Activated B cell treated with CpG ODN at 0.5 μM for 24 hours (primary cell): ENCODE measurements at regions of chr20 and their contacts with region 1.

Region 1: DNA sequence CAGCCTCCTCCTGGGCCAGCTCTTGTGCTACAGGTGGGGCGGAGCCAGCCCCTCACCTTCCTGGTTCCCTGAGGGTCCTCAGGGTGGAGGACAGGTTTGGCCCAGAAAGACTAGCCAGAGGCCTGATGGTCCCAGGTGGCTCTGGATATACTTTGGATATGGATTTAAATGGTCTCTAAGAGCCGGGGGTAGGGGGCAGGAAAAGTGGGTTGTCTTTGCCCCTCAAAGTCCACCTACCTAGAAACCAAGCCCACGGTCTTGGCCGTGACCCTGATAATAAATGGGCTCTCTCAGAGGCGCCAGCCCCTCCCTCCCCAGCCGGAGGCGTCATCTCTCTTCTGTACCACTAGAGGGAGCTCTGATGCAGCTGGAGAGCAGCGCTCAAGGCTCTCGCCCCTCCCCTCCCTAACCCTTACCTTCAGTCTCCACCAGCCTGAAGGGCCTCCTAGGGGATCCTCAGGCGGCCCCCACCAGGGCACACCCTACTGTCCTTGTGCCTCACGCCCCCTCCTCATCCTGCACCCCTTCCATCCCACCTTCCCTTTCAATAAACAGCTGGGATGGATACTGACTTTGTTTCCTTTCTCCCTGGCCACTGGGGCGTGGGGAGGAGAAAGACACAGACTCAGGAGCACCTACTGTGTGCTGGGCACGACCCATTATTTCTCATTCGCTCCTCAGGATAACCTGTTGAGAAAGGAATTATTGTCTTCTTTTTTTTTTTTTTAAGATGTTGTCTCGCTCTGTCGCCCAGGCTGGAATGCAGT is 7.6 kb downstream of the NRSN2 start:
- DNase-seq: peak; percentile 70
- ATAC-seq: peak; percentile 100
- H3K4me3 Mint-ChIP-seq: no peak overlapping the region
- H3K27ac Mint-ChIP-seq: no peak overlapping the region
- H3K4me1 Mint-ChIP-seq: peaks cover 11% of the 10 kb centered on the region
- H3K27me3 Mint-ChIP-seq: no peaks in the 10 kb centered on the region
- CTCF ChIP-seq: no peak

Region 2: DNA sequence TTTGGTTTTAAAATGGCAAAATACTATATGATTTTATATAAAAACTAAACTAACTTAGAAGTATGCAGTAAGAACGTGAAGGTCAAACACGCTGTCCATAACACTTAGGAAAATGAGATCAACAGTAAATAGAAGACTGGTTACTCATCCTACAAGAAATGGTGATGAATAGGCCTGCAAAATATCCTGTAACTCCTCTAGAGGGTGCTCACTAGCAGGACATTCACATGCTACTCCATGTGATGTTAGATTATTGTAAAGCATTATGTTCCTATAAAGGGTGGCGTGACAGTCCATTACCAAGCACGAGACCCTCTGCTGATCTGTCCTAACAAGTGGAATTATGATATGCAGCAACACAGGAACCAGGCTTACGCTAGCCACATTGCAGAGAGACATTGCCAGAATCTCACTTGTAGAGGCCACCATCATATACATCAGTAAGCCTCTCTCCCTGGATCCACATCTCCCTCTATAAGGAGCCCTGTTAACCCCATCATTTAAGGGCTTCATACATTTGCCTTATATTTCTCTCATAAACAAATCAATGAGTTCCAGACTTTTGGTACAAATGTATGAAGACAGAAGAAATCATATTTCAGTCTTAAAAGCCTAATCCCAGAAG is 145.4 kb before region 1 on chr20:
- CTCF ChIA-PET with region 1: no interaction called
- POLR2A ChIA-PET with region 1: no interaction called
- intact Hi-C with region 1: no loop called
- DNase-seq: no peak
- ATAC-seq: peak; percentile 70
- H3K4me3 Mint-ChIP-seq: no peak overlapping the region
- H3K27ac Mint-ChIP-seq: no peak overlapping the region
- H3K4me1 Mint-ChIP-seq: no peaks in the 10 kb centered on the region
- H3K27me3 Mint-ChIP-seq: peaks cover 3% of the 10 kb centered on the region
- CTCF ChIP-seq: no peak

Region 3: GRCh38 chr20:309841-310644 is 44.4 kb before region 1 on chr20:
- CTCF ChIA-PET with region 1: no interaction called
- POLR2A ChIA-PET with region 1: no interaction called
- intact Hi-C with region 1: no loop called
- DNase-seq: peak; percentile 77
- ATAC-seq: peak; percentile 100
- H3K4me3 Mint-ChIP-seq: peak overlapping the region; percentile 86
- H3K27ac Mint-ChIP-seq: peak overlapping the region; percentile 86
- H3K4me1 Mint-ChIP-seq: peaks cover 18% of the 10 kb centered on the region
- H3K27me3 Mint-ChIP-seq: no peaks in the 10 kb centered on the region
- CTCF ChIP-seq: no peak

Region 4: DNA sequence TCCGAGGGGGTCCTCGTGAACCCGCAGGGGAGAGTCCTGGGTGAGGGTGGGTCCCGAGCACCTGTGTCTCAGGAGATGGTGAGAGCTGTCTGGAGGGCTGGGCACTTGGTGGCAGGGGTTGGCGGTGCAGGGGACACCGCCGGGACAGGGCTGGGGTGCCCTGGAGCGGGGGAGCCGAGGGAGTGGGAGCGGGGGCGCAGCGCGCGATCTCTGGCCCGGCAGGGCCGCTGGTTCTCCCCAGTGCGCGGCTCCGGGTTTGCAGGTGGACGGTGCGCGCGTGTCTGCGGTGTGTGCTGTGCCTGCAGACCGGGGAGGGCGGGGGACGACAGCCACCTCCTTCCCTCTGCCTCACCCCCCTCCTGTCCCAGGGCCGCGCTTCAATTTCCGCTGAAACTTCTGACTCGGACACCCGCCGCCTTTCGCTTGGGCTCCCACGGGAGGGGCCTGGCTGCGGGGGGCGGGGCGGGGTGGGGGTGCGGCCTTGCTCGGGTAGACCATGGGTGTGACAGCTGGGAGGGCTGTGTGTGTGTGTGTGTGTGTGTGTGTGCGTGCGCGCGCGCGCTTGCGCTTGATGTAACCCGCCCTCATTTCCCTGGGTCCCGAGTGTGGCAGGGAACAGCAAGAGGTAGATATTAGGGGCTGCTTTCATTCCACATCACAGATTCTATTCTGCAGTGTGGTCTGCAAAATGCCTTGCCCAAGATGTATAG is 27.3 kb after region 1 on chr20:
- CTCF ChIA-PET with region 1: interaction called, 3 read pairs
- POLR2A ChIA-PET with region 1: no interaction called
- intact Hi-C with region 1: loop called (anchors 2 kb)
- DNase-seq: peak; percentile 64
- ATAC-seq: peak; percentile 79
- H3K4me3 Mint-ChIP-seq: peak overlapping the region; percentile 83
- H3K27ac Mint-ChIP-seq: peak overlapping the region; percentile 80
- H3K4me1 Mint-ChIP-seq: peaks cover 12% of the 10 kb centered on the region
- H3K27me3 Mint-ChIP-seq: no peaks in the 10 kb centered on the region
- CTCF ChIP-seq: no peak

Region 5: GRCh38 chr20:431012-431904 is 76.8 kb after region 1 on chr20:
- CTCF ChIA-PET with region 1: interaction called, 3 read pairs
- POLR2A ChIA-PET with region 1: no interaction called
- intact Hi-C with region 1: loop called (anchors 1 kb)
- DNase-seq: no peak
- ATAC-seq: no peak
- H3K4me3 Mint-ChIP-seq: no peak overlapping the region
- H3K27ac Mint-ChIP-seq: peak overlapping the region; percentile 35
- H3K4me1 Mint-ChIP-seq: peaks cover 31% of the 10 kb centered on the region
- H3K27me3 Mint-ChIP-seq: no peaks in the 10 kb centered on the region
- CTCF ChIP-seq: no peak

Region 6: DNA sequence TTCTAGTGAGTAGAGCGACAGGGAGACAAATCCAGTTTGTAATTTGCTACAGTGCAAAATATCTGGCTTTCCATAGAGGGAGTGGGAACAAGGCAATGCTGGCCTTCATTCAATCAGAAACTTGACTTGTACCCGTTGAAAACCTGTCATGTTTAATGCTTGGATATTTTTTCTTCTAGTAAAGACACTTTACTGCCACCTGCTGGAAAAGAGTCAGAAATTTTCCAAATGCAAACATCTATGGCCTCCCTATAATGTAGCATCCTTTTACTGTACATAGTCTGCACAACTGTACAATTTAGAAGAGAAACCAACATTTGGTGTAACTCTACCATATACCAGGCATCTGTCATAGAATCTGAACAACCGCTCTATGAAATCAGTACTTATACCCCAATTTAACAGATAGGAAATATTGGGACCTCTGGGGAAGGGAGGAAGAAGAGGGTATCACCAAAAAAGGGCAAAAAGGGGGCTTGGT is 124.5 kb after region 1 on chr20:
- CTCF ChIA-PET with region 1: interaction called, 43 read pairs
- POLR2A ChIA-PET with region 1: interaction called, 4 read pairs
- intact Hi-C with region 1: loop called (anchors 1 kb)
- DNase-seq: no peak
- ATAC-seq: peak; percentile 66
- H3K4me3 Mint-ChIP-seq: no peak overlapping the region
- H3K27ac Mint-ChIP-seq: no peak overlapping the region
- H3K4me1 Mint-ChIP-seq: peaks cover 5% of the 10 kb centered on the region
- H3K27me3 Mint-ChIP-seq: no peaks in the 10 kb centered on the region
- CTCF ChIP-seq: no peak

Region 7: DNA sequence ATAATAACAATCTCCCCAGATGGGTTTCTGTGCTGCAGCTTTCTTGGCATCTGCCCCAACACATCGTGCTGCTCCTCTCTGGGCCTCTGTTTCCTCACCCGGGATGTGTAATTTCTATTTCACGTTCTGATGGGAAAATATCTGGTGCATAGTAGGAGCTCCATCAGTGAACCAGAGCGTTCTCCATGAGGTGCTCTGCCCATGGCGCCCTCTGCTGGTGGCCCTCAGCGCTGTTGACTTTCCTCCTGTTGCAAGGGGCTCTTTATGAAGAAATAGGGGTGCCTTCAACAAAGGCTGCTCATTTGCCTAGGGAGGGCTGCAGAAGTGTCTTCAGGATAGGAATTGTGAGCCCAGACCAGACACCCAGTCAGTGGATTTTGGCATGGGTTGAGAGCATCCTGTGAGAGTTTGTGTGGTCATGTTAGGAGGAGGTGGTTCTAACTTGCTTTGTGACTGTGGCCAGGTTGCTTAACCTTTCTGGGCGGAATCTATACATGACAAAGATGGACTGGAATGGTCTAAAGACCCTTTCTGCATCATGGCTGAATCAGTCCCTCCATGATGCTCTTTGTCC is 313.0 kb after region 1 on chr20:
- CTCF ChIA-PET with region 1: interaction called, 6 read pairs
- POLR2A ChIA-PET with region 1: no interaction called
- intact Hi-C with region 1: loop called (anchors 1 kb)
- DNase-seq: no peak
- ATAC-seq: no peak
- H3K4me3 Mint-ChIP-seq: no peak overlapping the region
- H3K27ac Mint-ChIP-seq: no peak overlapping the region
- H3K4me1 Mint-ChIP-seq: no peaks in the 10 kb centered on the region
- H3K27me3 Mint-ChIP-seq: peaks cover 56% of the 10 kb centered on the region
- CTCF ChIP-seq: no peak

Region 8: DNA sequence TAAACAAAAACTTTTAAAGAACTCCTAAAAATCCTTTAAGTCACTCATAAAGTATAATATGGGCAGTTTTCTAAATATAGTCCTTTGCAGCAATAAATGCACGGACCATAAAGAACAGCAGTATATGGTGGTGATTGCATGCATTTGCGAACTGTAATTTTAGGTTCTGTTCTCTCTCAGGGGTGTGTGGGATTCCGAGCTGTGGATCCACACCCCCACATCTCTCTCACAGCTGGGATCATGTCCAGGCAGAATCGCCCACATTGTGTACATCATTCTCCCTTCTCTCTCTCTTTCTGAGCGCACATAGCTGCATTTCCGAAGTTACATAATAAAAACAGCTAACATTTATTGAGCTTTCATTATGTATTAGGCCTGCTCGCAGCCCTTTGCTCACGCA is 385.3 kb after region 1 on chr20:
- CTCF ChIA-PET with region 1: interaction called, 6 read pairs
- POLR2A ChIA-PET with region 1: no interaction called
- intact Hi-C with region 1: loop called (anchors 1 kb)
- DNase-seq: no peak
- ATAC-seq: no peak
- H3K4me3 Mint-ChIP-seq: no peak overlapping the region
- H3K27ac Mint-ChIP-seq: no peak overlapping the region
- H3K4me1 Mint-ChIP-seq: no peaks in the 10 kb centered on the region
- H3K27me3 Mint-ChIP-seq: peaks cover 12% of the 10 kb centered on the region
- CTCF ChIP-seq: no peak

Region 9: GRCh38 chr20:1075616-1076015 is 721.1 kb after region 1 on chr20:
- CTCF ChIA-PET with region 1: no interaction called
- POLR2A ChIA-PET with region 1: no interaction called
- intact Hi-C with region 1: no loop called
- DNase-seq: no peak
- ATAC-seq: peak; percentile 93
- H3K4me3 Mint-ChIP-seq: no peak overlapping the region
- H3K27ac Mint-ChIP-seq: no peak overlapping the region
- H3K4me1 Mint-ChIP-seq: peaks cover 6% of the 10 kb centered on the region
- H3K27me3 Mint-ChIP-seq: no peaks in the 10 kb centered on the region
- CTCF ChIP-seq: no peak